Activated CD4-positive, alpha-beta T cell treated with anti-CD3 and anti-CD28 coated beads, Interleukin-2, amount 10 ng/mL, durations not matched to agents 7 days and 5 days (primary cell): ENCODE measurements at regions of chr17 and their contacts with region 1.

Region 1: GRCh38 chr17:27654654-27655524 is 23.9 kb downstream of the LGALS9 start:
- DNase-seq: peak; percentile 68
- H3K4me3 Mint-ChIP-seq: no peak overlapping the region
- H3K27ac Mint-ChIP-seq: peak overlapping the region; percentile 33
- H3K4me1 Mint-ChIP-seq: peaks cover 9% of the 10 kb centered on the region
- H3K27me3 Mint-ChIP-seq: no peaks in the 10 kb centered on the region

Region 2: GRCh38 chr17:27760069-27760885 is 105.4 kb after region 1 on chr17:
- CTCF ChIA-PET with region 1: interaction called, 11 read pairs
- POLR2A ChIA-PET with region 1: no interaction called
- DNase-seq: peak; percentile 73
- H3K4me3 Mint-ChIP-seq: no peak overlapping the region
- H3K27ac Mint-ChIP-seq: no peak overlapping the region
- H3K4me1 Mint-ChIP-seq: no peaks in the 10 kb centered on the region
- H3K27me3 Mint-ChIP-seq: no peaks in the 10 kb centered on the region